CD8-positive, alpha-beta memory T cell (primary cell): ENCODE measurements at regions of chr20 and their contacts with region 1.

Region 1: GRCh38 chr20:3407771-3408637 is 535 bp upstream of the DNAAF9 start:
- DNase-seq: peak; percentile 68 to 82 (median 71)
- H3K4me3 ChIP-seq: peak overlapping the region; percentile 99
- H3K4me3 Mint-ChIP-seq: peak overlapping the region; percentile 93 to 99 (median 97)
- H3K27ac ChIP-seq: peak overlapping the region; percentile 71
- H3K27ac Mint-ChIP-seq: peak overlapping the region; percentile 90 to 96 (median 94)
- H3K4me1 ChIP-seq: peaks cover 5% of the 10 kb centered on the region
- H3K4me1 Mint-ChIP-seq: peaks cover 28 to 36% (median 32%) of the 10 kb centered on the region in 3 donors
- H3K27me3 ChIP-seq: no peaks in the 10 kb centered on the region
- H3K27me3 Mint-ChIP-seq: no peaks in the 10 kb centered on the region

Region 2: DNA sequence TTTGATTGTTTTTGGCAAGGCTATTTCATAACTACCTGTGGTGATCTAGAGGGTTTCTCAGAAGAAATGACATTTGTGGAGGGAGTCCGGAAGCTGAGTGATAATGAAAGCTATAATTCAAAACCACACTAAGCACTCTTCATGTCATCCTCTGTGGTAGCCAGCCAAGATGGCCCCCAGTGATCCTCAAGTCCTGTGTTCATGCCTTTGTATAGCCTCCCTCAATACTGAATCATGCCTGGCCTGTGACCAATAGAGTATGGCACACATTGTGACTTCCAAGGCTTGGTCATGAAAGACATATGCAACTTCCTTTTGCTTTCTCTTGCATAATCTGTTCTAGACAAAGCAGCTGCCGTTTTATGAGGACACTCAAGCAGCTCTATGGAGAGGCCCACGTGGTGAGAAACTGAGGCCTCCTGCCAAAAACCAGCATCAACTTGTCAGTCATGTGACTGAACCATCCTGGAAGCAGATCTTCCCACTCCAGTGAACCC is 12.3 kb after region 1 on chr20:
- CTCF ChIA-PET with region 1: interaction called, 4 read pairs
- POLR2A ChIA-PET with region 1: interaction called, 13 read pairs
- DNase-seq: peak in 3 of 5 donors; percentile 3 to 58 (median 34)
- H3K4me3 ChIP-seq: peak overlapping the region; percentile 12
- H3K4me3 Mint-ChIP-seq: peak overlapping the region in 6 of 7 donors; percentile 0 to 72 (median 16)
- H3K27ac ChIP-seq: peak overlapping the region; percentile 47
- H3K27ac Mint-ChIP-seq: peak overlapping the region; percentile 3 to 81 (median 49)
- H3K4me1 ChIP-seq: peaks cover 14% of the 10 kb centered on the region
- H3K4me1 Mint-ChIP-seq: peaks cover 9 to 10% (median 9%) of the 10 kb centered on the region in 3 donors
- H3K27me3 ChIP-seq: no peaks in the 10 kb centered on the region
- H3K27me3 Mint-ChIP-seq: peaks cover under 1 to 7% of the 10 kb centered on the region in 2 donors